Activated CD4-positive, alpha-beta T cell treated with anti-CD3 and anti-CD28 coated beads, Interleukin-2, amount 10 ng/mL, durations not matched to agents 24 days and 14 days (primary cell): ENCODE measurements at regions of chr2 and their contacts with region 1.

Region 1: GRCh38 chr2:26330113-26330549 is 15.8 kb upstream of the SELENOI start:
- DNase-seq: peak; percentile 95
- H3K4me3 Mint-ChIP-seq: no peak overlapping the region
- H3K27ac Mint-ChIP-seq: peak overlapping the region; percentile 36
- H3K4me1 Mint-ChIP-seq: peaks cover 18% of the 10 kb centered on the region
- H3K27me3 Mint-ChIP-seq: peaks cover 2% of the 10 kb centered on the region

Region 2: GRCh38 chr2:26172871-26173775 is 157.0 kb before region 1 on chr2 and contains the start of gene GAREM2:
- intact Hi-C with region 1: loop called (anchors 5 kb)
- DNase-seq: no peak
- H3K4me3 Mint-ChIP-seq: peak within 1 kb of the TSS; percentile 84
- H3K27ac Mint-ChIP-seq: peak within 1 kb of the TSS; percentile 22
- H3K4me1 Mint-ChIP-seq: peaks cover 11% of the 10 kb centered on the region
- H3K27me3 Mint-ChIP-seq: peaks cover 44% of the 10 kb centered on the region
- total RNA-seq, gene GAREM2: 7.9 and 8.2 TPM in 2 replicates